CD8-positive, alpha-beta T cell (primary cell): ENCODE measurements at regions of chr6 and their contacts with region 1.

Region 1: GRCh38 chr6:125790358-125791150 is at the start of gene NCOA7:
- DNase-seq: peak; percentile 58 to 90 (median 81)
- ATAC-seq: peak; percentile 79
- H3K4me3 ChIP-seq: peak within 1 kb of the TSS; percentile 78 to 81
- H3K4me3 Mint-ChIP-seq: peak within 1 kb of the TSS; percentile 91
- H3K27ac ChIP-seq: peak within 1 kb of the TSS; percentile 72 to 92
- H3K27ac Mint-ChIP-seq: peak within 1 kb of the TSS; percentile 98
- H3K4me1 ChIP-seq: peaks cover 23% of the 10 kb centered on the region
- H3K4me1 Mint-ChIP-seq: peaks cover 49% of the 10 kb centered on the region
- H3K27me3 ChIP-seq: no peaks in the 10 kb centered on the region
- H3K27me3 Mint-ChIP-seq: no peaks in the 10 kb centered on the region
- CTCF ChIP-seq: no peak
- total RNA-seq, gene NCOA7: 27.2 to 28.6 TPM

Region 2: GRCh38 chr6:125749173-125749864 is 41.2 kb before region 1 on chr6 and contains the start of gene HEY2:
- CTCF ChIA-PET with region 1: interaction called, 4 read pairs
- POLR2A ChIA-PET with region 1: interaction called, 12 read pairs
- intact Hi-C with region 1: loop called in 1 of 2 experiments (anchors 5 kb)
- DNase-seq: peak; percentile 54 to 93 (median 77)
- ATAC-seq: peak; percentile 70
- H3K4me3 ChIP-seq: peak within 1 kb of the TSS; percentile 63 to 80
- H3K4me3 Mint-ChIP-seq: peak within 1 kb of the TSS; percentile 88
- H3K27ac ChIP-seq: peak within 1 kb of the TSS in 1 of 2 experiments; percentile 1
- H3K27ac Mint-ChIP-seq: peak within 1 kb of the TSS; percentile 72
- H3K4me1 ChIP-seq: peaks cover 30% of the 10 kb centered on the region
- H3K4me1 Mint-ChIP-seq: peaks cover 38% of the 10 kb centered on the region
- H3K27me3 ChIP-seq: peaks cover 12 to 14% of the 10 kb centered on the region in 2 experiments
- H3K27me3 Mint-ChIP-seq: peaks cover 57% of the 10 kb centered on the region
- CTCF ChIP-seq: no peak
- total RNA-seq, gene HEY2: 0.11 to 0.33 TPM

Region 3: DNA sequence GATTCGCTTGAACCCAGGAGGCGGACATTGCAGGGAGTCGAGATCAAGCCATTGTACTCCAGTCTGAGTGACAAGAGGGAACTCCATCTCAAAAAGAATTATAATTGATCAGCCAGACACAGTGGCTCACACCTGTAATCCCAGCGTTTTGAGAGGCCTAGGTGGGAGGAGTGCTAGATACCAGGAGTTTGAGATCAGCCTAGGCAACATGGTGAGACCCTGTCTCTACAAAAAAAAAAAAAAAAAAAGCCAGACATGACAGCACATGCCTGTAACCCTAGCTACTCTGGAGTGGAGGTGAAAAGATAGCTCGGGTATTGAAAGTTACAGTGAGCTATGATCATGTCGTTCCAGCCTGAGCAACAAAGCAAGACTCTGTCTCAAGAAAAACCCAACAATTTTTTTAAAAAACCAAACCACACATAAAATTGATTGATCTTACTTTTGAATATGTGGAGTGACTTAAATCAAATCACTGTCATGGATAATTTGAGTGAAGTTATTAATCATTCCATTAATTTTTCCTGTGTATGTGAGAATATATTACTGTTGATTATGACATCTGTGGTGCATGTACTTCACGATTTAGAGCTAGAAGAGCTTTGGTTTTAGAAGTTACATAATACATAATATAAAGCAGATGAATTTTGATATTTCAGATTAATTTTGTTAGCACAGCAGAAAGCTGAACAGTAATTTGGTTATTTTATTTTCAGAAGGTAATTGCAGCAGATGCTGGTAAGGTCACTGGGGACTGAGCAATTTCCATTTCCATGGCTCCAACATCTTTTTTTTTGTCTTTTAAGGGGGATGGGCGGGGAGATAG is 34.6 kb after region 1 on chr6:
- CTCF ChIA-PET with region 1: interaction called, 29 read pairs
- POLR2A ChIA-PET with region 1: interaction called, 46 read pairs
- intact Hi-C with region 1: loop called in 1 of 2 experiments (anchors 2 kb)
- DNase-seq: no peak
- ATAC-seq: no peak
- H3K4me3 ChIP-seq: no peak overlapping the region
- H3K4me3 Mint-ChIP-seq: no peak overlapping the region
- H3K27ac ChIP-seq: no peak overlapping the region
- H3K27ac Mint-ChIP-seq: no peak overlapping the region
- H3K4me1 ChIP-seq: peaks cover 6% of the 10 kb centered on the region
- H3K4me1 Mint-ChIP-seq: peaks cover 42% of the 10 kb centered on the region
- H3K27me3 ChIP-seq: no peaks in the 10 kb centered on the region
- H3K27me3 Mint-ChIP-seq: no peaks in the 10 kb centered on the region
- CTCF ChIP-seq: no peak

Region 4: DNA sequence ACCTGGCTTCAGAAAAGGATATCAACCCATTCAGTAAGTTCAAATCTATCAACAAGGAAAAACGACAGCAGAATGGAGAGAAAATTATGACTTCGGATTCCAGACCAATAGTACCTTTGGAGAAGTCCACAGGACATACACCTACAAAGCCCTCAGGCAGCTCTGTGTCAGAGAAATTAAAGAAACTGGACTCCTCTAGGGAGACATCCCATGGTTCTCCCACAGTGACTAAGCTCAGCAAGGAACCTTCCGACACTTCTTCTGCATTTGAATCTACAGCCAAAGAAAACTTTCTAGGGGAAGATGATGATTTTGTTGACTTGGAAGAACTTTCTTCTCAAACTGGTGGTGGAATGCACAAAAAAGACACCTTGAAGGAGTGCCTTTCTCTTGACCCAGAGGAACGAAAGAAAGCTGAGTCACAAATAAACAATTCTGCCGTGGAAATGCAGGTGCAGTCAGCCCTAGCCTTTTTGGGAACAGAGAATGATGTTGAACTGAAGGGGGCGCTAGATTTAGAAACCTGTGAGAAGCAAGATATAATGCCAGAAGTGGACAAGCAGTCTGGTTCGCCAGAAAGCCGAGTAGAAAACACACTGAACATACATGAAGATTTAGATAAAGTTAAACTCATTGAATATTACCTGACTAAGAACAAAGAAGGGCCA is 98.6 kb after region 1 on chr6:
- CTCF ChIA-PET with region 1: interaction called, 14 read pairs
- POLR2A ChIA-PET with region 1: interaction called, 5 read pairs
- intact Hi-C with region 1: loop called in 1 of 2 experiments (anchors 10 kb)
- DNase-seq: peak in 3 of 9 experiments; percentile 15 to 53 (median 42)
- ATAC-seq: no peak
- H3K4me3 ChIP-seq: no peak overlapping the region
- H3K4me3 Mint-ChIP-seq: no peak overlapping the region
- H3K27ac ChIP-seq: no peak overlapping the region
- H3K27ac Mint-ChIP-seq: no peak overlapping the region
- H3K4me1 ChIP-seq: no peaks in the 10 kb centered on the region
- H3K4me1 Mint-ChIP-seq: no peaks in the 10 kb centered on the region
- H3K27me3 ChIP-seq: no peaks in the 10 kb centered on the region
- H3K27me3 Mint-ChIP-seq: no peaks in the 10 kb centered on the region
- CTCF ChIP-seq: peak; percentile 68

Region 5: DNA sequence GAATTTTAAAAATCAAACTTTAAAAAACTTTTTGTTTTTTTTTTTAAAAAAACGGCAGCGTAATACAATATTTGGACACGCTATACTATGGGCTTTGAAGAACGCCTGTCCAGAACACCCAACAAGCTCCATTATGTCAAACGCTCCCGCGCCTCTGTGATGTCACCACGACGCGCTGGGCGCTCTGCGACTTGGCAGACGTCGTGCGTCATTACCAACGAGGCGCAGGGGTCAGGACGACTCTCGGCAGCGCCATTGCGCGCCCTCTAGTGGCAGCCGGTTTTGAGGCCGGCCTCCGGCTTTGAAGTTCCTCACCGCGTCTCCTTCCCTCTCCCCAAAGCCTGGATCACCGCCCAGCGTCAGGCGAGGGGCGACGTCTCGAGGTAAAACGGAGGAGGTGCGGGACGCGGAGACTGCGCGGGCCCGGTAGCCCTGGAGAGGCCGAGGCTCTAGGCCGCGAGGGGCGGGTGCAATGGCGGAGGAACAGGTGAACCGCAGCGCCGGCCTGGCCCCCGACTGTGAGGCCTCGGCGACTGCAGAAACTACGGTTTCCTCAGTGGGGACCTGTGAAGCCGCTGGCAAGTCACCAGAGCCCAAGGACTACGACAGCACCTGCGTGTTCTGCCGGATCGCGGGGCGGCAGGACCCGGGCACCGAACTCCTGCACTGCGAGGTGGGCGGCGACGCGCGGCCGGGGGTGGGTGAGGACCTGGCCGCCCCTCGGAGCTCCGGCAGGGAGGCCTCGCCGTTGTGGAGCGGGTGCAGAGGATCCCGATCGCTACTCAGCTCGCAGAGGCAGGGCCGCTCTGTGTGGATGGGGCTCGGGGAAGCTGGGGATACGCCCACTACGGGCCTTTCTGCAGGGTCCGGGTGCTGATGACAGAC is 166.2 kb after region 1 on chr6 and contains the start of gene HINT3:
- CTCF ChIA-PET with region 1: interaction called, 33 read pairs
- POLR2A ChIA-PET with region 1: interaction called, 72 read pairs
- intact Hi-C with region 1: loop called in 1 of 2 experiments (anchors 1 kb)
- DNase-seq: peak; percentile 95 to 99 (median 98)
- ATAC-seq: peak; percentile 88
- H3K4me3 ChIP-seq: peak within 1 kb of the TSS; percentile 79 to 93
- H3K4me3 Mint-ChIP-seq: no peak within 1 kb of the TSS
- H3K27ac ChIP-seq: peak within 1 kb of the TSS; percentile 97 to 98
- H3K27ac Mint-ChIP-seq: no peak within 1 kb of the TSS
- H3K4me1 ChIP-seq: peaks cover 26% of the 10 kb centered on the region
- H3K4me1 Mint-ChIP-seq: peaks cover 9% of the 10 kb centered on the region
- H3K27me3 ChIP-seq: no peaks in the 10 kb centered on the region
- H3K27me3 Mint-ChIP-seq: peaks cover 6% of the 10 kb centered on the region
- CTCF ChIP-seq: peak; percentile 96
- total RNA-seq, gene HINT3: 14.2 to 15.4 TPM

Region 6: DNA sequence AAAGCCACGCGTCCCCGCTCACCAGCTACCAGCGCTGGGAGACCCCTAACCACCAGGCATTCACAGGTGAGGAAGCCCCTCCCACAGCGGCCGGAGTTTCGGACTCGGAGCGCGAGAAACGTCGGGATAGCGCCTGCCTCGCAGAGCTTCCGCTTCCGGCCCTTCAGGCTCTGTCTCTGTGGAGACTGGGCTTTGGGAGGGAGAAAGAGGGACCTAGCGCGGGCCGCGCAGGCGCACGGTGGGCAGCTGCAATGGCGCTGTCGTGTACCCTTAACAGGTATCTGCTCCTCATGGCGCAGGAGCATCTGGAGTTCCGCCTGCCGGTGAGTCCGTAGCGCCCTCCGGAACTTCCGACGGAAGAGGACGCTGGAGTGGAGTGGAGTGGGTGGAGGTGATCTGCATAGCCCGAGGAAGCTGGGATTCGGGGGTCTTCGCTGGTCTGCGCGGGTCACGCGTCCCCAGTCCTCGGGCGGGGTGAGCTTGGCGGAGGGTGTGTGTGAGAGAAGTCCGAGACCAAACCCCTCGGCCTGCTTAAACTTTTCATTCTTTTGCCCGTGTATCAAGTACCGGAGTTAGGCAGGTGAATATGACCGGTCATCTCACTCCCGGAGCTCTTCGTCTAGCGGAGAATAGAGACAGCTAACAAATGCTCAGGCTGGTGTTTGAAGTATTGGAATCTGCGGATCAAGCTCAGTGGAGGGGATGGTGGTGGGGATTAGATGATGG is 195.9 kb after region 1 on chr6 and contains the start of gene TRMT11:
- CTCF ChIA-PET with region 1: interaction called, 8 read pairs
- POLR2A ChIA-PET with region 1: interaction called, 43 read pairs
- intact Hi-C with region 1: loop called in 1 of 2 experiments (anchors 10 kb)
- DNase-seq: peak; percentile 63 to 92 (median 79)
- ATAC-seq: peak; percentile 95
- H3K4me3 ChIP-seq: peak within 1 kb of the TSS; percentile 75 to 95
- H3K4me3 Mint-ChIP-seq: peak within 1 kb of the TSS; percentile 35
- H3K27ac ChIP-seq: peak within 1 kb of the TSS; percentile 77 to 84
- H3K27ac Mint-ChIP-seq: no peak within 1 kb of the TSS
- H3K4me1 ChIP-seq: peaks cover 31% of the 10 kb centered on the region
- H3K4me1 Mint-ChIP-seq: peaks cover 15% of the 10 kb centered on the region
- H3K27me3 ChIP-seq: no peaks in the 10 kb centered on the region
- H3K27me3 Mint-ChIP-seq: no peaks in the 10 kb centered on the region
- CTCF ChIP-seq: no peak
- total RNA-seq, gene TRMT11: 19.0 to 19.4 TPM